GM18951 (cell line): ENCODE measurements at regions of chr1 and their contacts with region 1.

Region 1: DNA sequence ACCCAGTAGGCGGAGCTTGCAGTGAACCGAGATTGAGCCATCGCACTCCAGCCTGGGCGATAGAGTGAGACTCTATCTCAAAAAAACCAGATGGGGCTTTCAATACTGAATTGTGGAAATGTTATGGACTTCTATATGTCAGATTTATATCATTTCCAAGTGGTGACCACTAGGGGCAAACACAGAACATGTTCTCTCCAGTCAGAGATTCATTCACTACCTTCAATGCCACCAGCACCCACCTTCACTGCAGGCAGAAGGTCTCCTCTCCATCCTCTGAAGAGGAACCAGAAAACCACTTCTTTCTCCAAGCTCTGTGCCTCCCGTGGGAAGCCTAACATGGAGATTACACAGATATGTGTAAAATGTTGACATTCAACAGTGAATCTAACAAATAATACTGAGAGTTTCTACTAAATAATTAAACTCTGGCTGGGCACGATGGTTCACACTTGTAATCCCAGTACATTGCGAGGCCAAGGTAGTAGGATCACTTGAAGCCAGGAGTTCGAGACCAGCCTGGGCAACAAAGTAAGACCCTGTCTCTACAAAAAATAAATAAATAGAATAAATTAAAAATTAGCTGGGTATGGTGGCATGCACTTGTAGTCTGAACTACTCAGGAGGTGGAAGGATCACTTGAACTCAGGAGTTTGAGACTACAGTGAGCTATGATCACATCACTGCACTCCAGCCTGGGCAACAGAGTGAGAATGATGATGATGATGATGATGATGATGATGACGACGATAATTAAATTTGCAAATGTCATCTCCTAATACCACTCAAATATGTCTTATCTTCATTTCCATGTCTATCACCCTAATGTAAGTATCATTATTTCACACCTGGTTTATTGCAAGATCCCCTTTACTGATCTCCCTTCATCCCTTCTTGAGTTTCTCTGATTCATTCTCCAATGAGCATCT is 151.1 kb downstream of the ZNF281 start:
- POLR2A ChIP-seq: no peak

Region 2: DNA sequence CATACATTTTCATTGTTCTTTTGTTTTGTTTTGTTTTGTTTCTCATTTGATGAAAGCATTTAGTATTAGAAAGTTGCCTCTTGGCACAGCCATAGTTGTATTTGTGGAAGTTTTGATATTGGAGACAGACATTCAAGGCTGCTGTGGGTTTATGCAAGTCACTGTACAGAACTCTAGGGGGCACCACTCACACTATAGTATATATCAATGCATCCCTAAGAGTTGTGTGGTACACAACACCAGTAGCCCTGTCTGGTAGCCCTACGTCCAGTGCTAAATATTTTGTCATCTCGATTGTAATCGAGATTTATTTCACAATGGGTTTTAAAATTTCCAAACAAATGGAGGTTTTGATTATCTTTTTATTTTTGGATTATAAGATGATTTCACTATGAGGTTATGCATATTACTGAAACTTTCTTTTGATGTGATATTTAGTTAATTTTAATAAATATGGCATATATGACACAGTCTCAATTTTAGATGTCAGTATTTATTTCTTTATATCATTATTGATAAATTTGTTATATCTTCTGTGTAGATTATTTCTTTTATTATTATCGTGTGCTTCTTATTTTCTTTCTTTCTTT is 119.0 kb before region 1 on chr1:
- in situ Hi-C with region 1: loop called (anchors 10 kb)
- POLR2A ChIP-seq: no peak

Region 3: GRCh38 chr1:200207711-200208126 is 51.0 kb before region 1 on chr1:
- in situ Hi-C with region 1: no loop called
- POLR2A ChIP-seq: no peak